Naive thymus-derived CD8-positive, alpha-beta T cell (primary cell): ENCODE measurements at regions of chr1 and their contacts with region 1.

Region 1: GRCh38 chr1:27872059-27872801 is at the start of gene THEMIS2:
- DNase-seq: peak; percentile 57 to 87 (median 73)
- ATAC-seq: peak; percentile 75 to 79
- H3K4me3 Mint-ChIP-seq: peak within 1 kb of the TSS; percentile 88 to 100 (median 98)
- H3K27ac Mint-ChIP-seq: peak within 1 kb of the TSS; percentile 63 to 98 (median 94)
- H3K4me1 Mint-ChIP-seq: peaks cover 23 to 70% (median 49%) of the 10 kb centered on the region in 4 donors
- H3K27me3 Mint-ChIP-seq: no peaks in the 10 kb centered on the region
- polyA plus RNA-seq, gene THEMIS2: 14.1 to 48.5 (median 23.7) TPM

Region 2: DNA sequence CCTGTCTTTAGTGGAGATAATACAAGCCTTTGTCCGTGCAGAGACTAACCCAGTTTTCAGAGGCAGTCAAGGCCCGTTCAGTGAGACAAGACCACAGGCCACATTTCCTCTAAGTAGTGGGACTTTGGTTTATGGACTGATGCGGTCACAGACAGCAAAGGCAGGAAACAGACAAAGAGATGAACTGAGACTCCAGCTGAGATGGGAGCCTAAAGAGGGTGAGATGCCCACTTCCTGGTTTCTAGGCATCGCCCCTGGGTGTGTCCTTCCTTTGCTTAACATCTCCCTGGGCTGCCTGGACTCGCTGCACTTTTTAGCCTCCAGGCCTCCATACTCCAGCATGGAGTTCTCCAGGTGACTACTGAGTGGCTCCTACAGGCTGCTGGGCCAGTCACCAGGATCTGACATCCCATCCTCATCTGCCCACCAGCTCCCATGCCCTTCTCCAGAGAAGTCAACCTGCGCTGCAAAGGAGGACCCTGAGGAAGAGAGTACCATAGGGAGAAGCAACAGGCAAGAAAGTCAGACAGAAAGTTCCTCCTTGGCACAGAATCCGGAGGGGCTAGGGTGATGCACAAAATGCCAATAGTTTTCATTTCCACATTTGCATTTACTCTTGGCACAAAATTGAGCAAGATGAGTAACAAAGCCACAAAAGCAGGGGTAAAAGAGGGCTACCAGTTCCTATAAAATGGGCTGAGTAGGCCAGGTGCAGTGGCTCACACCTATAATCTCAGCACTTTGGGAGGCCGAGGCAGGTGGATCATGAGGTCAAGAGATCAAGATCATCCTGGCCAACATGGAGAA is 15.2 kb after region 1 on chr1:
- POLR2A ChIA-PET with region 1: interaction called, 11 read pairs
- DNase-seq: peak in 6 of 10 donors; percentile 16 to 61 (median 41)
- ATAC-seq: peak; percentile 86
- H3K4me3 Mint-ChIP-seq: peak overlapping the region; percentile 62 to 83 (median 75)
- H3K27ac Mint-ChIP-seq: peak overlapping the region; percentile 81 to 94 (median 91)
- H3K4me1 Mint-ChIP-seq: peaks cover 32 to 96% (median 57%) of the 10 kb centered on the region in 4 donors
- H3K27me3 Mint-ChIP-seq: no peaks in the 10 kb centered on the region

Region 3: GRCh38 chr1:27959400-27960217 is 87.4 kb after region 1 on chr1 and contains the start of gene XKR8:
- POLR2A ChIA-PET with region 1: interaction called, 17 read pairs
- DNase-seq: peak; percentile 73 to 88 (median 82)
- ATAC-seq: peak; percentile 98
- H3K4me3 Mint-ChIP-seq: peak within 1 kb of the TSS; percentile 79 to 90 (median 87)
- H3K27ac Mint-ChIP-seq: peak within 1 kb of the TSS; percentile 84 to 96 (median 93)
- H3K4me1 Mint-ChIP-seq: peaks cover 12 to 39% (median 21%) of the 10 kb centered on the region in 4 donors
- H3K27me3 Mint-ChIP-seq: peaks cover 0 to 5% (median 0%) of the 10 kb centered on the region in 5 donors
- polyA plus RNA-seq, gene XKR8: 7.2 to 14.4 (median 13.2) TPM